Activated naive CD4-positive, alpha-beta T cell treated with anti-CD3 and anti-CD28 coated beads for 36 hours (primary cell): ENCODE measurements at regions of chr5 and their contacts with region 1.

Region 1: DNA sequence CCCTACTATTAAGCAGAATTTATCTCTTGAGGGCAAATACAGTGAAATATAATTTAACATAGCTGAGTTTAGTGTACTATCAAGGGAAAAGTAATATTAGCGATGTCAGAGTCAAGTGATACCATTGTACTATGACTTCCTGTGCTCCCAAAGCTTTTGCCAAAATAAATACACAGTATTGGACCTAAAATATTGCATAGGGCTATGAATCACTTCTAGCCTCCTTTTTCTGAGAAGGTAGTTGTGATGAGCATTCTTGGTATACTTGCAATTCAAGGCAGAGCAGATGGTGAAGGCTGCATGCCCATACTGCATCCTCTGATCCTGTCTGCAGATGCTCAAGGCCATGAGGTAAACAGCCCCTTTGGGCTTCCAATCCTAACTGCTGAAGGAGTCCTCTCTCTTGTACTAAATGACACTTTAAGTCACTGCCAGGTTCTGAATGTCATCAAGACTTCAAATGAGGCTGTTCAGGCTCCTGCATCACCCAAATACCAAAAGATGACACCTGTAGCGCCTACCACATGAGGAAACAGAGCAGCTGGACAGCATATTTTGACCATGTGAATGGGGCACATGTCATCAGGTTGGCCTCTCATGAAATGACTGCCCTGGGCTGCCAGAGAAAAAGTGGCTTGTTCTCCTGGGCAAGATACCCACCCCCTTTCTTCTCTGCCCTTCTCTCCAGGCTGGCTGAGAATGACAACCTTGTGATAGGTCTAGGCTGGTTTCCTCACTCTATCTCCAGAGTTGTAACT is 29.7 kb upstream of the PPP2CA start:
- DNase-seq: no peak
- H3K4me3 Mint-ChIP-seq: no peak overlapping the region
- H3K27ac Mint-ChIP-seq: no peak overlapping the region
- H3K4me1 Mint-ChIP-seq: no peaks in the 10 kb centered on the region
- H3K27me3 Mint-ChIP-seq: no peaks in the 10 kb centered on the region

Region 2: DNA sequence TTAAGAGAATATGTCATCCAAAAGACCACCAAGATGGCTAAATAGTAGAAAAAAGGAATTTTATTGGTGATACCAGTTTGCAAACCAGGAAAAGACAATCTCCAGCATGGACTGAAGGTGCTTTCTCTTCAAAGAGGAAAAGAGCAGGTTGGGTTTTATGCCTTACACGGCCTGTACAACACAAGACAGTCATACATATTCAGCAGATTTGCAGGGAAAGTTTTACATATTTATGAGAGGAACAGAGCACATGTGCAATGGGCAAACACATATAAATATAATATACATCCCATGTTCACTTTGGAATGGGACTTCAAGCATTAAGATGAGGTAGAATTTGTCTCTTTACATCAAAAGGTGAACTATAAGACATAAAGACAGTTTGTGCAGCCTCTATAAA is 40.6 kb after region 1 on chr5:
- CTCF ChIA-PET with region 1: no interaction called
- intact Hi-C with region 1: no loop called
- DNase-seq: no peak
- H3K4me3 Mint-ChIP-seq: no peak overlapping the region
- H3K27ac Mint-ChIP-seq: no peak overlapping the region
- H3K4me1 Mint-ChIP-seq: no peaks in the 10 kb centered on the region
- H3K27me3 Mint-ChIP-seq: no peaks in the 10 kb centered on the region

Region 3: DNA sequence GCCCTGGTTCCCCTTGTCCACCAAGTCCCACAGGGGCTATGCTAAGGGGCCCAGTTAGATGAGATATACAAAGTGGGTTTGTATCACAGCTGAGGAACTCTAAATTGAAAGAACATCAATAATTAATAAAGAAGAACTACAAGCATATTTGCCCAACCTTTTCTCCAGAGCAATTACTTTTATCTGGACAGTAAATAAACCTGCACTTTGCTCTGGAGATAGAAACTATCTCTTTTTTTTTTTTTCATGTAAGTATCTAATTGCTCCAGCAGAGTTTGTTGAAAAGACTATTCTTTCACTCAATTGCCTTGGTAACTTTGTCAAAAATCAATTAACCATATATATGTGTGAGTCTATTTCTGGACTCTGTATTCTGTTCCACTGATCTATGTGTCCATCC is 162.1 kb after region 1 on chr5:
- CTCF ChIA-PET with region 1: interaction called, 11 read pairs
- intact Hi-C with region 1: no loop called
- DNase-seq: no peak
- H3K4me3 Mint-ChIP-seq: no peak overlapping the region
- H3K27ac Mint-ChIP-seq: no peak overlapping the region
- H3K4me1 Mint-ChIP-seq: peaks cover 6% of the 10 kb centered on the region
- H3K27me3 Mint-ChIP-seq: no peaks in the 10 kb centered on the region